Astrocyte of the cerebellum (primary cell): ENCODE measurements at regions of chr1 and their contacts with region 1.

Region 1: GRCh38 chr1:46030876-46031660 is 101.4 kb downstream of the PIK3R3 start:
- DNase-seq: no peak
- H3K4me3 ChIP-seq: no peak overlapping the region
- CTCF ChIP-seq: no peak

Region 2: GRCh38 chr1:46179138-46180081 is 148.3 kb after region 1 on chr1:
- in situ Hi-C with region 1: loop called (anchors 5 kb)
- DNase-seq: peak; percentile 80
- H3K4me3 ChIP-seq: no peak overlapping the region
- CTCF ChIP-seq: peak; percentile 96